OCI-LY7 (cell line): ENCODE measurements at regions of chr3 and their contacts with region 1.

Region 1: GRCh38 chr3:33704891-33705290 is 13.2 kb downstream of the CLASP2 start:
- DNase-seq: no peak
- H3K4me3 ChIP-seq: no peak overlapping the region
- H3K27ac ChIP-seq: no peak overlapping the region
- H3K4me1 ChIP-seq: no peaks in the 10 kb centered on the region
- CTCF ChIP-seq: no peak

Region 2: DNA sequence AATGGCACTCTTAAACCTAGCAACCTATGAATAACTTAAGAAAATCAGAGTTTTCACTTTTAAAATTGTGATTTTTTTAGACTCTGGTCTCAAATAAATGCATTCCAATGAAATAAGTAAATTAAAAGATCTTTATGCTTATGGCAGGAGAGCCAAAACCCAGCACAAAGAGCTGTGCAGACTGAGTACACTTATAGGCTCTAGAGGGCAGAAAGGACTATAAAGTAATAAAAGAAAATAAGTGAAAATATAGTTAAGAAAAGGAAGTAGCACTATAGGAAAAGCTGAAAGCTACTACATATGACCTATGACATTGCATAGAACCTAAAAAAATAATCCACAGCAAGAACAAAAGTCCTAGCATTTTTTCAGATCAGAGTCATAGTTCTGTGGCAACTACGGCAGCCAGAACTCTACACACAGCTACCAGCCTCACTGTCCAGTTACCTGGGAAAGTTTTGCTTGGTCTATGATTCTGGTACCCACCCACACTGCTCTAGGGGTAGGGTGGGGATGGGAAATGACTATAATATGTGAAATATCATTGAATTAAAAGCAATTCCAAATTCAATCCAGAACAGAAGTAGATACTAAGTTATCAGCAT is 17.4 kb before region 1 on chr3:
- CTCF ChIA-PET with region 1: no interaction called
- POLR2A ChIA-PET with region 1: interaction called, 3 read pairs
- intact Hi-C with region 1: loop called (anchors 2 kb)
- DNase-seq: no peak
- H3K4me3 ChIP-seq: no peak overlapping the region
- H3K27ac ChIP-seq: no peak overlapping the region
- H3K4me1 ChIP-seq: no peaks in the 10 kb centered on the region
- CTCF ChIP-seq: no peak